MCF 10A (cell line): ENCODE measurements at regions of chr18 and their contacts with region 1.

Region 1: DNA sequence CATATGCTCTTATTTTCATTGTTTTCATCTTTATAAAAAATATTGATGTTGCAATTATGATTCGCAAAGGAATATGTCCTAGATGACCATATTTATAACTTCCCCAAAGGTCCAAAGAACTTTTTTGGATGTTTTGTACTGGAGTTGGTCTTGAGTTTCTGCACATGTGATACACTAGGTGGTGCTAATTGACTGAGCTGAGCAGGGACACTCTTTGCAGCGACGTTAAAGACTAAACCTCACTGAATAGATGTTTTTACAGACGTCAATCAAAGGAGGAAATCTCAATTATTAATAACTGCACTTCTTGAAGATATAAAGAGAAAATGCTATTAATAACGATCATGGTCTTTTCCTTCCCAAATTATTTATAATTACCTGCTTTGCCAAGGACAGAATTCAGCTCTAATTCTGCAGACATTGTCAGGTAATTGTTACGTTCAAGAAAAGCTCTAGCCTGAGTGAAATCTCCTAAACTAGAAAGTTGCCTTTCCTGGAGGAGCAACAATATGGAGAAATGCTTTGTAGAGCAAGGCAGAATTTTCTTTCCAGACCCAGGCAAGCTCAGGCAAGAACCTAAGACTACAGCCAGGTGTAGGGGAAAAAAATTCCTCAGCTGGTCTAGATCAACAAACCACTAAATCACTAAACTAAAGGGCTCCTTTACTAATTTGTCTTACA is 119.3 kb upstream of the RBBP8 start:
- DNase-seq: peak; percentile 73
- H3K4me3 Mint-ChIP-seq: no peak overlapping the region
- H3K27ac Mint-ChIP-seq: peak overlapping the region; percentile 73
- H3K4me1 Mint-ChIP-seq: peaks cover 21% of the 10 kb centered on the region
- H3K27me3 Mint-ChIP-seq: no peaks in the 10 kb centered on the region
- CTCF ChIP-seq: peak; percentile 71

Region 2: GRCh38 chr18:22742409-22742808 is 71.4 kb before region 1 on chr18:
- CTCF ChIA-PET with region 1: no interaction called
- POLR2A ChIA-PET with region 1: no interaction called
- intact Hi-C with region 1: no loop called
- DNase-seq: no peak
- H3K4me3 Mint-ChIP-seq: no peak overlapping the region
- H3K27ac Mint-ChIP-seq: no peak overlapping the region
- H3K4me1 Mint-ChIP-seq: no peaks in the 10 kb centered on the region
- H3K27me3 Mint-ChIP-seq: peaks cover 16% of the 10 kb centered on the region
- CTCF ChIP-seq: no peak

Region 3: GRCh38 chr18:22800551-22800951 is 13.2 kb before region 1 on chr18:
- CTCF ChIA-PET with region 1: interaction called, 12 read pairs
- POLR2A ChIA-PET with region 1: no interaction called
- intact Hi-C with region 1: no loop called
- DNase-seq: no peak
- H3K4me3 Mint-ChIP-seq: no peak overlapping the region
- H3K27ac Mint-ChIP-seq: no peak overlapping the region
- H3K4me1 Mint-ChIP-seq: peaks cover 8% of the 10 kb centered on the region
- H3K27me3 Mint-ChIP-seq: no peaks in the 10 kb centered on the region
- CTCF ChIP-seq: no peak

Region 4: DNA sequence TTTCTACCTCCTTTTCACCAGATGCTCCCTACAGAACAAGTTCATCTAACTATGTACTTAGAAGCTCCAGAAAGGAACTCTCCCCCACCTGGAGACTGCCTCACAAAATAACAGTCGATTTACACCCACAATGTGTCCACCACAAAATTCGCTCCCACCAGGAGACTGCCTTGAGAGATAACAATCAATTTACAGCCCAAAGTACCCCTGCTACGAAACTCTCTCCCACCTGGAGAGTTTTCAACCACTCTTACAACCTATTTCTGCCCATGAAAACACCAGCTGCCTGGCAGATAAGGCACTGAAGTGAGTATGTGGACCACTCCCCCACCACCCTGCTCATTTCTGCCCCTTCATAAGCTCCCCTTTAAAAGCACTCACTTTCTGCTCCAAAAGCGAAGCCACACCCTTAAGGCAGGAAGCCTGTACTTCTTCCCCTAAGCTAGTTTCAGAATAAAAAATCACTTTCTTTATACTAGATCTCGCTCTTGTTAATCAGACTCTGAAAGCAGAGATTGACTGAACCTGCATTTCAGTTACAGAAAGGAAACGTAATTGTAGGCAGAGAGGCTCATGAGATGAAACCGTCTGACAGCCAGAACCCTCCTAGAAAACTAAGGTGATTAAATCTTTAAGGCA is 25.0 kb after region 1 on chr18:
- CTCF ChIA-PET with region 1: interaction called, 14 read pairs
- POLR2A ChIA-PET with region 1: interaction called, 14 read pairs
- intact Hi-C with region 1: no loop called
- DNase-seq: no peak
- H3K4me3 Mint-ChIP-seq: no peak overlapping the region
- H3K27ac Mint-ChIP-seq: no peak overlapping the region
- H3K4me1 Mint-ChIP-seq: peaks cover 27% of the 10 kb centered on the region
- H3K27me3 Mint-ChIP-seq: no peaks in the 10 kb centered on the region
- CTCF ChIP-seq: no peak

Region 5: GRCh38 chr18:22856870-22857269 is 43.1 kb after region 1 on chr18:
- CTCF ChIA-PET with region 1: interaction called, 3 read pairs
- POLR2A ChIA-PET with region 1: interaction called, 13 read pairs
- intact Hi-C with region 1: no loop called
- DNase-seq: peak; percentile 67
- H3K4me3 Mint-ChIP-seq: no peak overlapping the region
- H3K27ac Mint-ChIP-seq: peak overlapping the region; percentile 79
- H3K4me1 Mint-ChIP-seq: peaks cover 10% of the 10 kb centered on the region
- H3K27me3 Mint-ChIP-seq: no peaks in the 10 kb centered on the region
- CTCF ChIP-seq: no peak

Region 6: GRCh38 chr18:22977847-22978701 is 164.3 kb after region 1 on chr18:
- CTCF ChIA-PET with region 1: interaction called, 75 read pairs
- POLR2A ChIA-PET with region 1: interaction called, 23 read pairs
- intact Hi-C with region 1: loop called (anchors 1 kb)
- DNase-seq: peak; percentile 86
- H3K4me3 Mint-ChIP-seq: peak overlapping the region; percentile 68
- H3K27ac Mint-ChIP-seq: peak overlapping the region; percentile 98
- H3K4me1 Mint-ChIP-seq: peaks cover 24% of the 10 kb centered on the region
- H3K27me3 Mint-ChIP-seq: no peaks in the 10 kb centered on the region
- CTCF ChIP-seq: no peak

Region 7: GRCh38 chr18:23131693-23132319 is 318.0 kb after region 1 on chr18:
- CTCF ChIA-PET with region 1: interaction called, 3 read pairs
- POLR2A ChIA-PET with region 1: no interaction called
- intact Hi-C with region 1: loop called (anchors 2 kb)
- DNase-seq: peak; percentile 90
- H3K4me3 Mint-ChIP-seq: no peak overlapping the region
- H3K27ac Mint-ChIP-seq: no peak overlapping the region
- H3K4me1 Mint-ChIP-seq: peaks cover 11% of the 10 kb centered on the region
- H3K27me3 Mint-ChIP-seq: no peaks in the 10 kb centered on the region
- CTCF ChIP-seq: peak; percentile 54